RWPE1 (cell line): ENCODE measurements at regions of chr6 and their contacts with region 1.

Region 1: DNA sequence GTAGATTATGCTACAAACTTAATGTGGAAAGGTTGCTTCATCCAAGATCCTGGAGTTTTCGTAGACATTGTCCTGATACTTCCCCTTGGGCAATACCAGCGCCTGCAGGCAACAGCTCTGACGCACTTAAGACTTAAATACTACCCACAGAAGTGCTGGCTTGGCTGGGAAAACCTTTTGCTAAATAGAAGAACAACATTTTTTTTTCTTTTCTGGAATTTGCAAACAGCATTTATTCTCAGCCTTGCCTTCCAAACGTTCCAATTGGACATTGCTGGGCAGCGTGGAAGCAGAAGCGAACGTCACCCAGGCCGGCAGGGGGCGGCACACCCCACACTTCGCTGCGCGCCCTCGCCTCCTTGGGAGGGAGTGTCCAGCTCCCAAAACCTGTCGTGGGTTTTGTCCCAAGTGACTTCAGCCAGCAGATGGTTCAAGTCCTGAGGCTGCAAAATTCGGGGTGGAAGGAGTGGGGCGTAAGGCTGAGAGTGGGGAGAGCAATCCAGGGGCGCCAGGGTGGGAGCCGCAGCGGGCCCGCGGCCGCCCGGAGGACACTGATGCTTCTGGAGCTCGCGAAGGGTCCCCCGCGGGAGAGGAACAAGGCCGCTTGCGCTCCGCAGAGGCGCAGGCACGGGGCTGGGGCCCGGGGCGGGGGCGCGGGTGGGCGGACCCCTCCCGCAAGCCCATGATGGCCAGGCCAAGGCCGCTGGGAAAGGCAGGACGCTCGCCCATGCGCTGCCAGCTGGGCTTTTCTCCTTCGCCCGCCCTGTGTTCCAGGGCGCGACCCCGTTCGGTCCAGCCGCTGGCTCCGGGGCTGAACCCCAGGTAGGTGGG is 60.8 kb upstream of the MAP3K4 start:
- DNase-seq: peak; percentile 74
- H3K27ac ChIP-seq: peak overlapping the region; percentile 61
- CTCF ChIP-seq: peak; percentile 90

Region 2: GRCh38 chr6:160912411-160912810 is 18.4 kb before region 1 on chr6:
- CTCF ChIA-PET with region 1: interaction called, 12 read pairs
- POLR2A ChIA-PET with region 1: no interaction called
- DNase-seq: no peak
- H3K27ac ChIP-seq: no peak overlapping the region
- CTCF ChIP-seq: no peak

Region 3: DNA sequence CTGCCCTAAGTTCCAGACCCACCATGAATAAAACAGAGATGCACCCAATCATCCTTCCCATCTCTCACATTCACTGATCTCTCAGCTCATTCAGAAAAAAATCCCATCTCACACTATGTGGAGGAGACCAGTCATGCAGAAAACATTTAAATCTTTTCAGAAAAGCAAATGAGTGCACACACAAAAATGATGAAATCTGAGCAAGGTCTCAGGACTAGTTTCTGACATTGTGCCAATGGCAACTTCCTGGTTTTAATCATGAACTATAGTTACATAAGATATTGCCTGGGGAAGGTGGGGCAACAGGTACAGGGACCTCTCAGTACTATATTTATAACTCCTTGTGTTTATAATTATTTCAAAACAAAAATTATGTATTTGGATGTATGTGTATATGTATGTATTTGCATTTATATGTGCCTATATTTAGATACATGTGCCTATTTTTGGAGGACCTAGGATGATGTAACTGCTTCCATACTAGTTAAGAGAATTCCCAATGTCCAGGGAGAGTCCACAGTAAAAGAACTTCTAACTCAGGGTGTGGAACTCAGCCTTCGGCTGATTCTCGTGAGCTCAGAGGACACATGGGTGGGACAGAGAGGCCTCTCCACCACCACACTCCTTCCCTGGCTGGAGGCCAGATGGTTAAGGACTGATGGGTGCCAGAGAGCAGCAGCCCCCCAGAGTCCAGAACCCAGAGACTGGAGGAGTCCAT is 10.9 kb before region 1 on chr6:
- CTCF ChIA-PET with region 1: interaction called, 4 read pairs
- POLR2A ChIA-PET with region 1: interaction called, 11 read pairs
- DNase-seq: peak; percentile 67
- H3K27ac ChIP-seq: peak overlapping the region; percentile 66
- CTCF ChIP-seq: no peak

Region 4: GRCh38 chr6:160992061-160992979 is 61.6 kb after region 1 on chr6:
- CTCF ChIA-PET with region 1: interaction called, 30 read pairs
- POLR2A ChIA-PET with region 1: no interaction called
- DNase-seq: peak; percentile 56
- H3K27ac ChIP-seq: peak overlapping the region; percentile 96
- CTCF ChIP-seq: peak; percentile 84